Endothelial cell of umbilical vein (primary cell): ENCODE measurements at regions of chr2 and their contacts with region 1.

Region 1: DNA sequence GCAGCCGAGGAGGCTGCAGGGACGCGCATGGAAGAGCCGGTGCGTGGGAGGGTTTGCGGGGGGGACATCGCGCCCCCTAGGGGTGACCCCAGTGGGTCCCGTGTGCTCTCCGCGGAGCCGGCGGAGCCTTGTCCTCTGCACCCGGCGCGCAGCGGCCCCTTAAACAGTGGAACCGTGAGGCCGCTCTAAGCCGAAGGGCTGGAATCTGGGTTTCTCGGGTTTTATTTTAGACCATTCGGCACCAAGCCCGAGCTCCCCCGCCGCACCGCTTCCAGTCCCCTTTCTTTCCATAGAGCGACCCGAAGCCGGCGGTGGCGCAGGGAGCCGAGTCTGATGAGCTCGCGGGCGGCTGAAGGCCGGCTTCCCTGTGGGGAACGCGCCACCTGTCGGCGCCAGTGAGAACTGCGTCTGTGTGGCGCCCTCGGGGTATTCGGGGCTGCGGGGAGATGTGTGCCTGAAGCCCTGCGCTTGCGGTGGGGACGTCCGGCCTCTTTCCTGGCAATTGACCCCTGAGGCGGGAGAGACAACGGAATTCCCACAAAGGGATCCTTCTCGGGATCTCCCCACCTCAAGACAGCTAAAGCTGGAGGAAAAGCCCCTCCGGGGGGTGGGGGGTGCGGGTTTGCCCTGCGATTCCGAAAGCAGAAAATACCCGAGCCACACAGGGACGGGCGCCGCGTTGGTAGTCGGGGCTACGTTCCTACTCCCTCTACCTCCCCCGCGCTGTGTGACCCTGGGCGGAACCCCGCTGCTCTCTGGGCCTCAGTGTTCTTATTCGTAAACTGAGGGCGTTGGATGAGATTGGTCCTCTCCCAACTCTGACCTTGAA is 8.2 kb upstream of the EN1 start:
- DNase-seq: peak; percentile 68
- H3K4me3 ChIP-seq: no peak overlapping the region
- H3K27ac ChIP-seq: no peak overlapping the region
- H3K4me1 ChIP-seq: peaks cover 2% of the 10 kb centered on the region
- H3K27me3 ChIP-seq: peaks cover 95 to 98% of the 10 kb centered on the region in 2 experiments
- CTCF ChIP-seq: peak; percentile 81 to 90
- POLR2A ChIP-seq: no peak

Region 2: GRCh38 chr2:118032169-118033013 is 823.3 kb before region 1 on chr2:
- CTCF ChIA-PET with region 1: interaction called, 52 read pairs
- POLR2A ChIA-PET with region 1: no interaction called
- dilution Hi-C with region 1: no loop called
- intact Hi-C with region 1: loop called (anchors 1 kb)
- DNase-seq: peak; percentile 36
- H3K4me3 ChIP-seq: no peak overlapping the region
- H3K27ac ChIP-seq: no peak overlapping the region
- H3K4me1 ChIP-seq: no peaks in the 10 kb centered on the region
- H3K27me3 ChIP-seq: peaks cover 2 to 7% of the 10 kb centered on the region in 2 experiments
- CTCF ChIP-seq: peak; percentile 65 to 72
- POLR2A ChIP-seq: no peak

Region 3: DNA sequence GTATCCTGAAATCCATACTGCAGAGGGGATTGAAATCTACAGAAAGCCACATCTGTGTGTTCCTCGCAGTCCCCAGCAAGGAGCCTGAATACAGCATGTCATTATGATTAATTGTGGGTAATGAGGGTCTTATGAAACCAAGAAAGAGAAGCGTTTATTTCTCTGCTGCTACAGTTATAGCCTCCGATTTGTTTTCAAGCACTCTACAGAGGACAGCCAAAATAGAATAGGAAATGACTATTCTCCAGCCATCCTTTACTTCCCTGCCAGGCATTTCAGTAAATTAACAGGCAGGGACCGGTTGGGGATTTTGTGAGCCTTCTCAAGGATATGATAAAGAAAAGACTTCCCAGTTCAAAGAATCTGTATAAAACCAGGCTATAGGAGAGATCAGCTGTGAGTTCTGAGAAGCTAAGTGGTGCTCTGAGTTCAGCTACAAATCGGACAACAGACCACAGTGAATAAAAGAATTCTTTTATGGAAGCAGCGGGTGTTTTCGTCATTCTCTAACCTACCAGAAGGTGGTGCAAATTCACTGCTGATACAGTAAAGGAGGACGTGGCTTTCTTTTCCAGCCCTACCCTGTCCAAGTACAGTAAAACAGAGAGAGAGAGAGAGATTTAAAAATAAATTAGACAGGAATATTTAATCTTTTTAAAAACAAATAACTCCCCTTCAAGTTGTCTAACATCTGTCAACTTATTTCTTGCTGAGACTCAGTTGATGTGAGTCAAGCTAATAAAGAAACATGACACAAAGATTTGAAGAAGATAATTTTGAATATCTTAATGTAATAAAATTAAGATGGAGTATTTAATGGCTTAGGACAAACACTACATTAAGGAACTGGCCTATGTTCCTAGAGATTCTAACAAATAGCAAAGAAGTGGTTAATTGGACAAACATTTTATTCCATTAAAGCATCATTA is 633.7 kb before region 1 on chr2:
- CTCF ChIA-PET with region 1: interaction called, 162 read pairs
- POLR2A ChIA-PET with region 1: no interaction called
- dilution Hi-C with region 1: no loop called
- intact Hi-C with region 1: loop called (anchors 1 kb)
- DNase-seq: peak; percentile 69
- H3K4me3 ChIP-seq: no peak overlapping the region
- H3K27ac ChIP-seq: no peak overlapping the region
- H3K4me1 ChIP-seq: peaks cover 6% of the 10 kb centered on the region
- H3K27me3 ChIP-seq: peaks cover 41 to 65% of the 10 kb centered on the region in 2 experiments
- CTCF ChIP-seq: peak; percentile 46 to 70
- POLR2A ChIP-seq: no peak

Region 4: DNA sequence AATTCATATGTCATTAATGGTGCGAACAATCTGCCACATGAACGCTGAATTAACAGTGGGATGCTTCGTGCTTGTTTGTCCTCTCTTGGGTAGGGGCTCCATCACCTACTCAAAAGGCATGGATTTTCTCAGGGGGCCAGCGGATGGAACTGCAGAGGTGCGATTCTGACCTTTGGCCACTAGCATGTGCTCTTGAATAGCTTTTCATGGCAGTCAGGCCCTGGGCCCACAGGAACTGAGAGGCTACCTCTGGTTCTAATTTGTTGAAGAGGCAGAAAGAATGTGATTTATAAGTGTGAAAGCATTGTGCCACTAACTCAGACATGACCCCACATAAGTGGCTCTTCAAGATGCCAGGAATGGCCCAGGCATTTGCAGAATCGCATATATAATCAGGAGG is 484.1 kb before region 1 on chr2:
- CTCF ChIA-PET with region 1: interaction called, 7 read pairs
- POLR2A ChIA-PET with region 1: no interaction called
- dilution Hi-C with region 1: no loop called
- intact Hi-C with region 1: loop called (anchors 10 kb)
- DNase-seq: no peak
- H3K4me3 ChIP-seq: no peak overlapping the region
- H3K27ac ChIP-seq: no peak overlapping the region
- H3K4me1 ChIP-seq: no peaks in the 10 kb centered on the region
- H3K27me3 ChIP-seq: no peaks in the 10 kb centered on the region
- CTCF ChIP-seq: peak in 1 of 2 donors; percentile 8
- POLR2A ChIP-seq: no peak

Region 5: GRCh38 chr2:118738524-118739308 is 116.9 kb before region 1 on chr2:
- CTCF ChIA-PET with region 1: interaction called, 3 read pairs
- POLR2A ChIA-PET with region 1: no interaction called
- dilution Hi-C with region 1: no loop called
- intact Hi-C with region 1: loop called (anchors 5 kb)
- DNase-seq: peak; percentile 78
- H3K4me3 ChIP-seq: no peak overlapping the region
- H3K27ac ChIP-seq: peak overlapping the region; percentile 78
- H3K4me1 ChIP-seq: peaks cover 11% of the 10 kb centered on the region
- H3K27me3 ChIP-seq: no peaks in the 10 kb centered on the region
- CTCF ChIP-seq: no peak
- POLR2A ChIP-seq: no peak

Region 6: GRCh38 chr2:118882709-118883210 is 27.1 kb after region 1 on chr2:
- CTCF ChIA-PET with region 1: interaction called, 10 read pairs
- POLR2A ChIA-PET with region 1: no interaction called
- dilution Hi-C with region 1: no loop called
- intact Hi-C with region 1: no loop called
- DNase-seq: peak; percentile 35
- H3K4me3 ChIP-seq: no peak overlapping the region
- H3K27ac ChIP-seq: no peak overlapping the region
- H3K4me1 ChIP-seq: no peaks in the 10 kb centered on the region
- H3K27me3 ChIP-seq: no peaks in the 10 kb centered on the region
- CTCF ChIP-seq: peak; percentile 70 to 91
- POLR2A ChIP-seq: no peak